Caco-2 (cell line): ENCODE measurements at regions of chr6 and their contacts with region 1.

Region 1: GRCh38 chr6:52325695-52326441 is 36.1 kb upstream of the PAQR8 start:
- DNase-seq: peak; percentile 85 to 91
- H3K4me3 ChIP-seq: no peak overlapping the region
- H3K4me3 Mint-ChIP-seq: peak overlapping the region; percentile 28
- H3K27ac Mint-ChIP-seq: peak overlapping the region; percentile 88
- H3K4me1 ChIP-seq: peaks cover 62% of the 10 kb centered on the region
- H3K4me1 Mint-ChIP-seq: peaks cover 63% of the 10 kb centered on the region
- H3K27me3 ChIP-seq: no peaks in the 10 kb centered on the region
- H3K27me3 Mint-ChIP-seq: no peaks in the 10 kb centered on the region
- CTCF ChIP-seq: no peak

Region 2: DNA sequence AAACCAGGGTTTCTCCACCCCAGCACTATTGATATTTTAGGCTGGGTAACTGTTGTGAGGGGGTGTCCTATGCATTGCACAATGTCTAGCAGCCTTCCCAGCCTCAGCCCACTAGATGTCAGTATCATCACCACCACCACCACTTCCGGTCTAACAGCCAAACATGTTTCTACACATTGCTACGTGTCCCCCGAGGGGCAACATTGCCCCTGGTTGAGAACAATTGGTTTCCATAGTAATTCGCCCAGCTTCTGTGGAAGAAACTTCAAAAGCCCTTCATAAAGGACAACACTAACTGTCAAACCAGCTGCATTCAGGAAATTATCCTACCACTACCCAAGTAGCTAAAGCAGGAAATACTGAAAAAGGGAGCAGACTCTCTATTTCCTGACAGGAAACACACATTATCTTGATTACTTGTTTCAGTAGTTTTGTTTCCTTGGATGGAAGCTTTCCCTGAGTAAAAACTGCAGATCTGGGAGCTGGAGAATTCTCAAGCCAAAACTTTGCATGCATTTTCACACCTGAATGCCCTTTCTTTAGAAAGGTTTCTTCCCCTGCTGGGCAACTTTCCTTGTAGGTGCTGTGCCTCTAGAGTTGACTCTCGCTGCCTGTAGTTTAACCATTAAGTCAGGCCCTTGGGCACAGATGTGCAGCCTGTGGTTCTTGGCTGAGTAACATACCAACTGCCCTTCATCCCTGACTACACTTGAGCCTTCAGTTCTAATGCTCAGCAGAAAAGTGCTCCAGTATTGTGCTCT is 262.1 kb before region 1 on chr6:
- CTCF ChIA-PET with region 1: no interaction called
- POLR2A ChIA-PET with region 1: no interaction called
- intact Hi-C with region 1: no loop called
- DNase-seq: peak; percentile 48 to 63
- H3K4me3 ChIP-seq: no peak overlapping the region
- H3K4me3 Mint-ChIP-seq: no peak overlapping the region
- H3K27ac Mint-ChIP-seq: peak overlapping the region; percentile 59
- H3K4me1 ChIP-seq: 0 out of 2 replicates have a peak, but pooled peaks cover 4% of the 10 kb centered on the region
- H3K4me1 Mint-ChIP-seq: peaks cover 7% of the 10 kb centered on the region
- H3K27me3 ChIP-seq: no peaks in the 10 kb centered on the region
- H3K27me3 Mint-ChIP-seq: no peaks in the 10 kb centered on the region
- CTCF ChIP-seq: peak; percentile 55 to 71

Region 3: GRCh38 chr6:52304983-52305390 is 20.9 kb before region 1 on chr6:
- CTCF ChIA-PET with region 1: interaction called, 7 read pairs
- POLR2A ChIA-PET with region 1: interaction called, 3 read pairs
- intact Hi-C with region 1: loop called (anchors 1 kb)
- DNase-seq: no peak
- H3K4me3 ChIP-seq: no peak overlapping the region
- H3K4me3 Mint-ChIP-seq: no peak overlapping the region
- H3K27ac Mint-ChIP-seq: peak overlapping the region; percentile 98
- H3K4me1 ChIP-seq: peaks cover 51% of the 10 kb centered on the region
- H3K4me1 Mint-ChIP-seq: peaks cover 38% of the 10 kb centered on the region
- H3K27me3 ChIP-seq: no peaks in the 10 kb centered on the region
- H3K27me3 Mint-ChIP-seq: no peaks in the 10 kb centered on the region
- CTCF ChIP-seq: no peak

Region 4: GRCh38 chr6:52352239-52353008 is 26.6 kb after region 1 on chr6:
- CTCF ChIA-PET with region 1: interaction called, 3 read pairs
- POLR2A ChIA-PET with region 1: interaction called, 6 read pairs
- intact Hi-C with region 1: loop called (anchors 1 kb)
- DNase-seq: peak; percentile 70 to 75
- H3K4me3 ChIP-seq: no peak overlapping the region
- H3K4me3 Mint-ChIP-seq: peak overlapping the region; percentile 62
- H3K27ac Mint-ChIP-seq: peak overlapping the region; percentile 89
- H3K4me1 ChIP-seq: peaks cover 39% of the 10 kb centered on the region
- H3K4me1 Mint-ChIP-seq: peaks cover 38% of the 10 kb centered on the region
- H3K27me3 ChIP-seq: no peaks in the 10 kb centered on the region
- H3K27me3 Mint-ChIP-seq: no peaks in the 10 kb centered on the region
- CTCF ChIP-seq: no peak